ENCODE measurements at regions of chr16 and their contacts with region 1.

Region 1: DNA sequence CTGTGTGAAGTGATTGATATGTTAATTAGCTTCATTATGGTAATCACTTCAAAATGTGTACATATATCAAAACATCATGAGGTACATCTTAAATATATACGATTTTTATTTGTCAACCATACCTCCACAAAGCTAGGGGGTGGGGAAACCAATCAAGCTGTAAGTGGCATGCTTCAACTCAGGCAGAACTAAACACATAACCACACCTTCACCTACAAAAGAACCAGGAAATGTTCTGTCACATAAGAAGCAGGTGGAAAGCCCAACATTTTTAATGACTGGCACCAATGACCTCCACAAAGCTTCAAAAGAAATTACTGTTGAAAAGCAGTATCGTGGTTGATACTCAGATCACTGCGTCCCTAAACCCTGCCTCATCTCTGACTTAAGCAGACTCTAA is 867.7 kb upstream of the EEF2KMT start:
- DNase-seq: no peak
- ATAC-seq: no peak
- H3K4me3 ChIP-seq: no peak overlapping the region
- H3K27ac ChIP-seq: no peak overlapping the region
- H3K4me1 ChIP-seq: no peaks in the 10 kb centered on the region
- H3K27me3 ChIP-seq: no peaks in the 10 kb centered on the region; a peak in 1 of 5 replicates
- CTCF ChIP-seq: no peak
- EP300 ChIP-seq: no peak
- POLR2A ChIP-seq: no peak
- RAD21 ChIP-seq: no peak

Region 2: DNA sequence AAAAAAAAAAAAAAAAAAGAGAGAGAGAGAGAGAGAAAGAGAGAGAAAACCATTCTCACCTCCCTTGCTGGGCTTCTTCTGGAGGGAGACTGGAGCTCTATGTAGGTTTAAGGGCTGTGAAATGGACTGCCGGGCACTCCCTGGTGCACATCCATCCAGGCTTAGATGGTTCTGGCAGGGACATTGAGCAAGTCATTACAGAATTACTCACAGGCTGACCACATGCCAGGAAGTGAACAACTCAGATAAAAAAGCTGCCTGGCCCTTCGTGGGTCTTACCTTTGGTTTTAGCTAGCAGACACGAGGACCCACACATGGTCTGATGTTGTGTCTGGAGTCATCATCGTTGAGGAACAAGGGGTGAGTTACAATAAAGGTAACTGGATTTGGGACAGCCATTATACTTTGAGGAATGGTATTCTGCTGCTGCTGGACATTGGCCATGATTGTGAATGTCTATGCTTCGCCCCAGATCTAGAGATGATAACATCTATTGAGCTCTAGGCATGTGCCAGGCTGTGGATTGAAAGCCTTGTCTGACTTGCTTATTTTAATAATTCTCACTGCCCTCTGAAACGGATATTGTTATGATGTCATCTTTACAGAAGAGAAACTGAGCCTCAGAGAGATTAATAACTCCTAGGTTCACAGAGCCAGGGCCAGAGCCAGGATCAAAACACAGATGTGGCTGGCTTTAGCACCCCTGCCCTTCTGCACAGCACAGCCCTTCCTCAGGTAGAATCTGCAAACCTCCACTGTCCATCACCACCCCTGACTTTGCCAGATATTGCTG is 20.2 kb before region 1 on chr16:
- CTCF ChIA-PET with region 1: no interaction called
- POLR2A ChIA-PET with region 1: no interaction called
- in situ Hi-C with region 1: no loop called
- intact Hi-C with region 1: no loop called
- DNase-seq: no peak
- ATAC-seq: no peak
- H3K4me3 ChIP-seq: no peak overlapping the region
- H3K27ac ChIP-seq: no peak overlapping the region
- H3K4me1 ChIP-seq: no peaks in the 10 kb centered on the region
- H3K27me3 ChIP-seq: no peaks in the 10 kb centered on the region; a peak in 1 of 5 replicates
- CTCF ChIP-seq: no peak
- EP300 ChIP-seq: no peak
- POLR2A ChIP-seq: no peak
- RAD21 ChIP-seq: no peak

Region 3: GRCh38 chr16:6016530-6017184 is 51.3 kb after region 1 on chr16:
- CTCF ChIA-PET with region 1: no interaction called
- POLR2A ChIA-PET with region 1: no interaction called
- in situ Hi-C with region 1: no loop called
- intact Hi-C with region 1: no loop called
- DNase-seq: peak; percentile 56 to 65 (median 62)
- ATAC-seq: peak; percentile 67; the same call in 1 of the 3 replicates
- H3K4me3 ChIP-seq: no peak overlapping the region
- H3K27ac ChIP-seq: no peak overlapping the region
- H3K4me1 ChIP-seq: no peaks in the 10 kb centered on the region
- H3K27me3 ChIP-seq: peaks cover 0 to 31% of the 10 kb centered on the region in 2 experiments; a peak in 1 of 5 replicates
- CTCF ChIP-seq: peak in 2 of 3 experiments; percentile 51 to 67; a peak in 4 of 6 replicates
- EP300 ChIP-seq: no peak
- POLR2A ChIP-seq: no peak
- RAD21 ChIP-seq: peak in 1 of 2 experiments; percentile 55; a peak in 2 of 4 replicates

Region 4: GRCh38 chr16:6177616-6178180 is 212.4 kb after region 1 on chr16:
- CTCF ChIA-PET with region 1: no interaction called
- POLR2A ChIA-PET with region 1: no interaction called
- in situ Hi-C with region 1: no loop called
- intact Hi-C with region 1: no loop called
- DNase-seq: no peak
- ATAC-seq: no peak
- H3K4me3 ChIP-seq: no peak overlapping the region
- H3K27ac ChIP-seq: no peak overlapping the region
- H3K4me1 ChIP-seq: no peaks in the 10 kb centered on the region
- H3K27me3 ChIP-seq: no peaks in the 10 kb centered on the region
- CTCF ChIP-seq: no peak
- EP300 ChIP-seq: no peak
- POLR2A ChIP-seq: no peak
- RAD21 ChIP-seq: no peak

Region 5: GRCh38 chr16:6926762-6927161 is 961.4 kb after region 1 on chr16:
- CTCF ChIA-PET with region 1: no interaction called
- POLR2A ChIA-PET with region 1: no interaction called
- in situ Hi-C with region 1: loop called (anchors 10 kb)
- intact Hi-C with region 1: no loop called
- DNase-seq: no peak
- ATAC-seq: no peak
- H3K4me3 ChIP-seq: no peak overlapping the region
- H3K27ac ChIP-seq: no peak overlapping the region
- H3K4me1 ChIP-seq: no peaks in the 10 kb centered on the region
- H3K27me3 ChIP-seq: no peaks in the 10 kb centered on the region
- CTCF ChIP-seq: no peak
- EP300 ChIP-seq: no peak
- POLR2A ChIP-seq: no peak
- RAD21 ChIP-seq: no peak

Measured in K562 (cell line).